Naive thymus-derived CD4-positive, alpha-beta T cell (primary cell): ENCODE measurements at regions of chr19 and their contacts with region 1.

Region 1: GRCh38 chr19:42219812-42220750 is at the start of gene ZNF526:
- DNase-seq: peak; percentile 92 to 97 (median 96)
- ATAC-seq: peak; percentile 88
- H3K4me3 ChIP-seq: peak within 1 kb of the TSS; percentile 72
- H3K4me3 Mint-ChIP-seq: peak within 1 kb of the TSS; percentile 95 to 99 (median 98)
- H3K27ac ChIP-seq: peak within 1 kb of the TSS; percentile 88
- H3K27ac Mint-ChIP-seq: peak within 1 kb of the TSS; percentile 88 to 98 (median 95)
- H3K4me1 ChIP-seq: peaks cover 37 to 43% of the 10 kb centered on the region in 2 donors
- H3K4me1 Mint-ChIP-seq: peaks cover 46 to 62% (median 55%) of the 10 kb centered on the region in 7 donors
- H3K27me3 ChIP-seq: no peaks in the 10 kb centered on the region
- H3K27me3 Mint-ChIP-seq: peaks cover 0 to 3% (median 0%) of the 10 kb centered on the region in 5 donors
- total RNA-seq, gene ZNF526: 8.6 to 25.2 (median 22.7) TPM

Region 2: DNA sequence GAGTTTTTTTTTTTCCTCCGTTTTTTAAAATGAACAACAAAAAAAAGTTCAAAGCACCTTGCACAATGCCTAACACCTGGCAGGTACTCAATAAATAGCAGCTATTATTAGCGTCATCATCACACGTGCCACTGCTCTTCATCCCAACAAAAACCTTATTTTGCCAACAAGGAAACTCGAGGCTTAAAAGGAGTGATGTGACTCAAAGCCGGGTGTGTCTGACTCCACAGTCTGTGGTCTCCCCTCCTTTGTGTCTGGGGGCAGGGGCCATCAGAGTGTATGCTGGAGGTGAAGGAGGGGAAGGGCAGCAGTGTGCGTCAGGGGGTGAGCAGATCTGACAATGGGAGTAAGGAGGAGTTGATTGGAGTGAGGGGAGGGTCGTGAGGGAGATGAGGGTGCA is 53.8 kb before region 1 on chr19:
- CTCF ChIA-PET with region 1: no interaction called
- POLR2A ChIA-PET with region 1: no interaction called
- intact Hi-C with region 1: no loop called
- DNase-seq: no peak
- ATAC-seq: no peak
- H3K4me3 ChIP-seq: no peak overlapping the region
- H3K4me3 Mint-ChIP-seq: no peak overlapping the region
- H3K27ac ChIP-seq: no peak overlapping the region
- H3K27ac Mint-ChIP-seq: no peak overlapping the region
- H3K4me1 ChIP-seq: no peaks in the 10 kb centered on the region
- H3K4me1 Mint-ChIP-seq: peaks cover 0 to 4% (median 0%) of the 10 kb centered on the region in 7 donors
- H3K27me3 ChIP-seq: no peaks in the 10 kb centered on the region
- H3K27me3 Mint-ChIP-seq: peaks cover 0 to 11% (median 0%) of the 10 kb centered on the region in 5 donors

Region 3: DNA sequence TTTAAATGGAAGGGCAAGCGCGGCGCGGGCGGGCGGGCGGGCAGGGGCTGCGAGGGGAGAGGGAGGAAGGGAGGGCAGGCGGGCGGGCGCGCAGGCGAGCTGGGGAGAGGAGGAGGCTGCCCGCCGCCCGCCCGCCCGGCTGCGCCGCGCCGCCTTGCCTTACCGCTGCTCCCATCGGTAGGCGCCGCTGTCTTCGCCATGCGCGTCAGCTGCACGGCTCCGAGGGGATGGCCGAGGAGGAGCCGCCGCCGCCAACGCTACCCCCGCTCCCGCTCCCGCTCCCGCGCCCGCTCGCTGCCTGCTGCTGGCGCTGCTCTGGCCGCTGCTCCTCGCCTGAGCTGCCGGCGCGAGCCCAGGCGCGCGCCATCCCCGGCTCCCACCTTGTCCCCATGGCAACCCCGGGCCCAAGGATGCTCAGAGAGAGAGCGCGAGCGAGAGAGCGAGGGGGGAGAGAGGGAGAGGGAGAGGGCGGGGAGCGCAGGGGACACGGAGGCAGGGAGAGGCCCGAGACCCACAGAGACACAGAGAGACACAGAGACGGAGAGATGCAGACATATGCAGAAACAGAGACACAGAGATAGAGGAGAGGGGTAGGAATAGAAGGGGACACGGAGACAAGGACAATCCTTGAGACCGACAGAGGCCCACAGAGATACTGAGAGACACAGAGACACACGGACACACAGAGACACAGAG is 42.9 kb before region 1 on chr19:
- CTCF ChIA-PET with region 1: interaction called, 4 read pairs
- POLR2A ChIA-PET with region 1: interaction called, 6 read pairs
- intact Hi-C with region 1: loop called in 1 of 2 experiments (anchors 2 kb)
- DNase-seq: peak; percentile 52 to 82 (median 67)
- ATAC-seq: peak; percentile 96
- H3K4me3 ChIP-seq: peak overlapping the region; percentile 41
- H3K4me3 Mint-ChIP-seq: peak overlapping the region in 1 of 10 donors; percentile 12
- H3K27ac ChIP-seq: no peak overlapping the region
- H3K27ac Mint-ChIP-seq: no peak overlapping the region
- H3K4me1 ChIP-seq: peaks cover 12 to 21% of the 10 kb centered on the region in 2 donors
- H3K4me1 Mint-ChIP-seq: peaks cover 16 to 24% (median 19%) of the 10 kb centered on the region in 7 donors
- H3K27me3 ChIP-seq: peaks cover 0 to 11% of the 10 kb centered on the region in 2 donors
- H3K27me3 Mint-ChIP-seq: peaks cover 13 to 34% (median 19%) of the 10 kb centered on the region in 5 donors

Region 4: DNA sequence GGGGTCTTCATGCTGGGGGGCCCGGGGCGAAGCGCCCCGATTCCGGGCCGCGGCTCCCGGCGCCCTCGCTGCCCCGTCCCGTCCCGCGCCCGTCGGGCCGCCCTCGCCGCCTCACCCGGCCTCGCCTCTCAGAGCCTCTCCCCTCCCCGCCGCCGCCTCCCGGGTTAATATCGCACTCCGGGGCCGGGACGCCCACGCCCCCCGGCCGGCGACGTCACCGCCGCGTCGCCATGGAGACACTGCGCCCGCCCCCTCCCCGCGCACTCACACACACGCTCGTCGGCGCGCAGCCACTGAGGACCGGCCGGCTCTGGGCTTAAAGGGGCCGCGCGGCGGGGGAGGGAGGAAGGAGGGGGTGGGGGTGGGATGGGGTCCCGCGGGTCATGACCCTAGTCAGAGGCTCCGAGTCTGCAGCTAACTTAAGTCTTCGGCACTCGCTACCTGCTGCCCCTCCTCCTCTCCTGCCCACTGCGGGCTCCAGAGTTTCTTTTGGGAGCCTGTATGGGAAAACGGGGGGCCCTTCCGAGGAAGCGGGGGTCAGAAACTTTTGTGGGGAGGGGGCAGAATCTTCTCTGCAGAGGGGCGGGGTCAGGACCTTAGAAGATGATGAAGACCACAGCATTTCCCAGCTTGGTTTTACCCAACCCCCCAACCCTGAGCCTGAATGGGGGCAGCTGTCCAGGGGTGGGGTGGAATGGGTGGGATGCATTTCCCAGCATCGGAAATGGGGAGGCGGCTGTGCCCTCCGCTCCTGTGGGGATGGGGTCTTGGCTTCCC is 35.1 kb after region 1 on chr19 and contains the start of gene ERF:
- CTCF ChIA-PET with region 1: no interaction called
- POLR2A ChIA-PET with region 1: no interaction called
- intact Hi-C with region 1: loop called in 1 of 2 experiments (anchors 1 kb)
- DNase-seq: peak; percentile 90 to 98 (median 94)
- ATAC-seq: peak; percentile 90
- H3K4me3 ChIP-seq: peak within 1 kb of the TSS; percentile 96
- H3K4me3 Mint-ChIP-seq: peak within 1 kb of the TSS; percentile 42 to 99 (median 77)
- H3K27ac ChIP-seq: peak within 1 kb of the TSS; percentile 99
- H3K27ac Mint-ChIP-seq: peak within 1 kb of the TSS in 8 of 9 donors; percentile 43 to 92 (median 82)
- H3K4me1 ChIP-seq: peaks cover 20 to 29% of the 10 kb centered on the region in 2 donors
- H3K4me1 Mint-ChIP-seq: peaks cover 20 to 37% (median 30%) of the 10 kb centered on the region in 7 donors
- H3K27me3 ChIP-seq: no peaks in the 10 kb centered on the region
- H3K27me3 Mint-ChIP-seq: peaks cover 0 to 10% (median 0%) of the 10 kb centered on the region in 5 donors
- total RNA-seq, gene ERF: 42.5 to 105 (median 51.8) TPM

Region 5: DNA sequence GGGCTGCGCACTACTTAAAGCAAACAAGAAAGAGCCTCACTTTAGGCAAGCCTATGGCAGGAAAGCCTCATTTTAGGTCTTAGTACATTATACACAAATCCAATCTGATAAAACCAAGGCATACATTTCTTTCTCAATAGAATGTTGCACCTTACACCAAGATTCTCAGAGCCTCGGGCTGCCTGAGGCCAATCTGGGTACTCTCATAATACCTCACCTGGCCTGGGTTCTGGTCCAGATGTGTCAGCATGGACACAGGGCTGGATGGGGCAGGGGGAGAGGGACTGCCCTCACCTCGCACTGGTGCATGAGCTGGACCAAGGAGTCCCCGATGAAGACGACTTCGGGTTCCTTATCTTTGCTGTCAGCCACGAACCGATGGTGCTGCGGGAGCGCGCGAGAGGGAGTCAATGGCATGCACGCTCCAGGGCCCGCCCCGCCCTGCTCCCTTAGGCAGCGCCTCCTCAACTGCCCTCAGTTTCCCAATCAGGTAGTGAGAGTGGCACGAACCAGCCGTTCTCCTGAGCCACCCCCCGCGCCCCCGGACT is 81.6 kb after region 1 on chr19 and contains the start of gene PRR19:
- CTCF ChIA-PET with region 1: interaction called, 5 read pairs
- POLR2A ChIA-PET with region 1: interaction called, 3 read pairs
- intact Hi-C with region 1: loop called (anchors 1 kb)
- DNase-seq: peak in 1 of 9 donors; percentile 21
- ATAC-seq: peak; percentile 8
- H3K4me3 ChIP-seq: peak within 1 kb of the TSS; percentile 85
- H3K4me3 Mint-ChIP-seq: peak within 1 kb of the TSS; percentile 83 to 92 (median 89)
- H3K27ac ChIP-seq: peak within 1 kb of the TSS; percentile 71
- H3K27ac Mint-ChIP-seq: peak within 1 kb of the TSS; percentile 64 to 94 (median 88)
- H3K4me1 ChIP-seq: peaks cover 11 to 16% of the 10 kb centered on the region in 2 donors
- H3K4me1 Mint-ChIP-seq: peaks cover 11 to 30% (median 23%) of the 10 kb centered on the region in 7 donors
- H3K27me3 ChIP-seq: no peaks in the 10 kb centered on the region
- H3K27me3 Mint-ChIP-seq: no peaks in the 10 kb centered on the region
- total RNA-seq, gene PRR19: 0.32 to 0.68 (median 0.38) TPM in 4 of 5 experiments, not detected in the other

Region 6: DNA sequence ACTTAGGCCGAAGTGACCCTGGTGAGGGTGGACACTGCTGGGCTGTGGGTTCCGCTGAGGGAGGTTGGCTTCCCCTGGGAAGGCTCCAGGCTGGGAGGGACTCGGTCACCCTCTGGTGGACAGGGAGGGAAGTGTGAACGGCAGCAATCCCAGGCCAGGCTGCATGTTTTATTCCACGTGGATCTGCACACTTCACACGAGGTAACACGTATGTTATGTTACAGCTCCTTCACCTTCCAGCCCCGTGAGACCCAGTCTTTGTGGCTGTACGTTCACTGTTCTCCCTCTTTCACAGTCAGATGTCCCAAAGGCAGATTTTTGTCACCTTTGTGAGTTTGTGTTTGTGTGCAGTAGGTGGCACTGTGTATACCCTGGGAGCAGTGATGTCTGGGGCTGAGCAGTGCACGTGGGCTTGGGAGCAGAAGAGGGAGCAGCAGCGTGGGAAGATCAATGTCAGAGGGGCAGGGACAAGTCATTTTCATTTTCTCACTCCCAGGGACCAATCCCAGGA is 699.5 kb after region 1 on chr19:
- CTCF ChIA-PET with region 1: no interaction called
- POLR2A ChIA-PET with region 1: no interaction called
- intact Hi-C with region 1: no loop called
- DNase-seq: no peak
- ATAC-seq: no peak
- H3K4me3 ChIP-seq: no peak overlapping the region
- H3K4me3 Mint-ChIP-seq: no peak overlapping the region
- H3K27ac ChIP-seq: no peak overlapping the region
- H3K27ac Mint-ChIP-seq: no peak overlapping the region
- H3K4me1 ChIP-seq: no peaks in the 10 kb centered on the region
- H3K4me1 Mint-ChIP-seq: no peaks in the 10 kb centered on the region
- H3K27me3 ChIP-seq: no peaks in the 10 kb centered on the region
- H3K27me3 Mint-ChIP-seq: peaks cover 0 to 32% (median 15%) of the 10 kb centered on the region in 5 donors